Esophagus squamous epithelium (tissue), 5 donors: ENCODE measurements at regions of chr16 and their contacts with region 1.

Region 1: DNA sequence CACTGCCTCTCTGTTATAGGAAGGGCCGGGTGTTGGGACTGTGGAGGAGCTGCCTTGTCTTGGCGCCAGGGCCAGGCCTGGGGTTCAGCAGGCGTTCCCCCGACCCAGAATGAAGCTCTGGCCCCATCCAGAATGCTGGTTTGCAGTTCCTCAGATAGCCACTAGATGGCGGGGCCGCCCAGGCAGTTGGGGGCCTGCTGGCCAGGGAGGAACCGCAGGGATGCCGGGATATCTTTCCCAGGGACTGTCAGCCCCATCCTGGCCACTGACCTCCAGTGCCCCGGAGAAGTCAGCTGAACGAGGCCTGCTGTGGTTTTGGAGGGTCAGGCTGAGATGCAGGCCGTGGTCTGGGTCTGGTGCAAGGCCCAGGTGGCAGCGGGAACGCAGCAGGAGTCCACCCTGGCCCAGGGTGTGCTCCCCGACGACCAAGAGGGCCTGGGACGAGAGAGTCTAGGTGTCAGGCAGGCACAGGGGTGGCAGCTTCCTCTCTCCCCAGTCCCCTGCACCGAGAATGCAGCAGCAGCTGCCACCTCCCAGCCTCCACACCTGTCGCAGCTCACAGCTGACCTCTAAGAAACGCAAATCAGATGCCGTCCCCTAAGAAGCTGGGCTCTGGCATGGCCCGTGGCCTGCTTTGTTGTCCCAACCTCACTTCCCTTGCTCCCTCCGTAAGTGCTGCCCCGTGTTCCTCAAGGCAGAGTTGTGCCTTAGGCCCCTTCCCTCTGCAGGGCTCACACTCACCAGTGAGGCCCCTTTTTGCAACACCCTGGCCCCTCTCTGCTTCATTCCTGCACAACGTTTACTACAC is 51.2 kb downstream of the RMI2 start:
- DNase-seq: no peak
- H3K4me3 ChIP-seq: no peak overlapping the region
- H3K27ac ChIP-seq: no peak overlapping the region
- H3K4me1 ChIP-seq: peaks cover 0 to 28% (median 0%) of the 10 kb centered on the region in 3 donors
- H3K27me3 ChIP-seq: peaks cover 0 to 3% (median 0%) of the 10 kb centered on the region in 4 donors
- CTCF ChIP-seq: peak; percentile 92 to 99 (median 98)
- POLR2A ChIP-seq: no peak

Region 2: GRCh38 chr16:10964039-10964890 is 432.2 kb before region 1 on chr16:
- intact Hi-C with region 1: loop called (anchors 10 kb)
- DNase-seq: no peak
- H3K4me3 ChIP-seq: no peak overlapping the region
- H3K27ac ChIP-seq: peak overlapping the region in 2 of 4 donors; percentile 32 to 53
- H3K4me1 ChIP-seq: peaks cover 3 to 23% (median 4%) of the 10 kb centered on the region in 3 donors
- H3K27me3 ChIP-seq: no peaks in the 10 kb centered on the region
- CTCF ChIP-seq: peak; percentile 88 to 96 (median 90)
- POLR2A ChIP-seq: no peak

Region 3: GRCh38 chr16:11526655-11527350 is 130.4 kb after region 1 on chr16:
- intact Hi-C with region 1: loop called (anchors 5 kb)
- DNase-seq: no peak
- H3K4me3 ChIP-seq: no peak overlapping the region
- H3K27ac ChIP-seq: no peak overlapping the region
- H3K4me1 ChIP-seq: no peaks in the 10 kb centered on the region
- H3K27me3 ChIP-seq: peaks cover 0 to 6% (median 0%) of the 10 kb centered on the region in 4 donors
- CTCF ChIP-seq: no peak
- POLR2A ChIP-seq: no peak

Region 4: GRCh38 chr16:11639925-11640899 is 243.8 kb after region 1 on chr16:
- intact Hi-C with region 1: loop called (anchors 5 kb)
- DNase-seq: no peak
- H3K4me3 ChIP-seq: peak overlapping the region in 1 of 4 donors; percentile 25
- H3K27ac ChIP-seq: peak overlapping the region; percentile 80 to 95 (median 89)
- H3K4me1 ChIP-seq: peaks cover 12 to 40% (median 19%) of the 10 kb centered on the region in 3 donors
- H3K27me3 ChIP-seq: no peaks in the 10 kb centered on the region
- CTCF ChIP-seq: peak in 1 of 6 experiments; percentile 17
- POLR2A ChIP-seq: peak in 2 of 4 donors; percentile 42 to 68

Region 5: DNA sequence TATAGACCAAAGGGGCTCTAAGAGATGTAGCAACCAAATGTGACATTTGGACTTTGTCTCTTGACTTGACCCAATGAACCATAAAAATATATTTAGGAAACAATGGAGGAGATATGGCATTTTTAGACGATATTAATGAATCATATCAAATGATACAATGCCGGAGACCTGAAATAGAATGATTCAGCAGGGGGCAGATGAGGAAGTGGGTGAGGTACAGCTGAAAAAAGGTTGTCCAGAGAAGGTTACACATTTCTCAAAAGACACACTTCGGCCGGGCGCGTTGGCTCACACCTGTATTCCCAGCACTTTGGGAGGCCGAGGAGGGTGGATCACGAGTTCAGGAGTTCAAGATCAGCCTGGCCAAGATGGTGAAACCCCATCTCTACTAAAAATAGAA is 255.4 kb after region 1 on chr16:
- intact Hi-C with region 1: no loop called
- DNase-seq: no peak
- H3K4me3 ChIP-seq: no peak overlapping the region
- H3K27ac ChIP-seq: no peak overlapping the region
- H3K4me1 ChIP-seq: peaks cover 0 to 7% (median 0%) of the 10 kb centered on the region in 3 donors
- H3K27me3 ChIP-seq: no peaks in the 10 kb centered on the region
- CTCF ChIP-seq: no peak
- POLR2A ChIP-seq: no peak

Region 6: DNA sequence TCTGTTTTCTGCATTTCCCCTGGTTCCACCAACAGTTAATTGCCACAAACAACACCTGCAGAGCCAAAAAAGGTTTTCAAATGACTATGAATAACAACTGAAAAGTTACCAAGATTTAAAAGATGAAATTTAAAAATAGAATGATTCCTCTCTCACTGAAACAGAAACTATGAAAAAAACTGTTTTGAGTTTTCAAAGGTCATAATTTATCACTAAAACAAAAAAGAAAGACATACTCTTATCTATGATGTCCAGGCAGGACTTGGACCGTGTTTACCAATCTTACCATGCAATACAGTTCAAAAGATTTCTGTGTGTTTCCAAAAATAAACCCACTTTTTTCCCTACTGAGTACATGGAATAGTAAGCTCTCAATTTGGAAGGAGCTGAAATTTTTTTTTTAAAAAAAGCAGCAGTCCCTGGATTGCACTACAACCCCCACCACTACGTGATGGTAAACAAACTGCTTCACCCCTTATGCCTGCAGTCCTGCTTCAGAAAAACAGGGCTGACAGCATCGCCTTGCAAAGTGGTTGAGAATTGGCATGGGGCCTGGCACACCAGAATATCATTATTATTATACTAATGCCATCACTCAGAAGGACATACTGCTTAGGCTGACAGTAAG is 337.7 kb after region 1 on chr16:
- intact Hi-C with region 1: no loop called
- DNase-seq: no peak
- H3K4me3 ChIP-seq: no peak overlapping the region
- H3K27ac ChIP-seq: peak overlapping the region in 2 of 4 donors; percentile 6 to 32
- H3K4me1 ChIP-seq: peaks cover 0 to 32% (median 0%) of the 10 kb centered on the region in 3 donors
- H3K27me3 ChIP-seq: no peaks in the 10 kb centered on the region
- CTCF ChIP-seq: no peak
- POLR2A ChIP-seq: no peak